ENCODE measurements at regions of chr4 and their contacts with region 1.

Region 1: GRCh38 chr4:7987148-7987989 is 47.7 kb upstream of the AFAP1 start:
- DNase-seq: peak; percentile 57
- H3K27ac ChIP-seq: peak overlapping the region; percentile 81
- CTCF ChIP-seq: peak; percentile 90

Region 2: GRCh38 chr4:7243609-7244330 is 743.6 kb before region 1 on chr4:
- CTCF ChIA-PET with region 1: no interaction called
- POLR2A ChIA-PET with region 1: no interaction called
- DNase-seq: no peak
- H3K27ac ChIP-seq: no peak overlapping the region
- CTCF ChIP-seq: no peak

Region 3: GRCh38 chr4:7802093-7802726 is 185.2 kb before region 1 on chr4:
- CTCF ChIA-PET with region 1: interaction called, 23 read pairs
- POLR2A ChIA-PET with region 1: no interaction called
- DNase-seq: peak; percentile 77
- H3K27ac ChIP-seq: peak overlapping the region; percentile 39
- CTCF ChIP-seq: peak; percentile 96

Region 4: DNA sequence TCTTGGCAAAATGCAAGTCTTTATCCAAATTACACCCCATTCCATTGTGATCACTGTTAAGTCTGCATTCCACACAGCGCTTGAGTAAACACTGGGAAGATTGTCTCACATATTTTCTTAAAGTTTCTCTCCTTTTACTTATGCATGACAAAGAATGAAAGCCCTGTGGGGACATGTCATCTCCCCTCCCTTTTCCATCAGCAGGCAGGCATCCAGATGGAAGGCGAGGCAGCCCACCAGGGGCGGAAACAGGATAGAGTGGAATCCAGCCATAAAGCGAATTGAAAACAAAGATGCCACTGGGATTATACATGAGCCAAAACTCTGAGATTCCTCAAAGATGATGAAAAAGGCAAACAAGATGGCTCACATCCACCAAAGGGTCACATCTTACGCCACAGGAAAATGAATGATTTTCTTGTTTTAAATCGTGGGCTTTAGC is 125.9 kb before region 1 on chr4:
- CTCF ChIA-PET with region 1: no interaction called
- POLR2A ChIA-PET with region 1: no interaction called
- DNase-seq: peak; percentile 31
- H3K27ac ChIP-seq: peak overlapping the region; percentile 77
- CTCF ChIP-seq: no peak

Measured in RWPE1 (cell line).